OCI-LY7 (cell line): ENCODE measurements at regions of chr1 and their contacts with region 1.

Region 1: DNA sequence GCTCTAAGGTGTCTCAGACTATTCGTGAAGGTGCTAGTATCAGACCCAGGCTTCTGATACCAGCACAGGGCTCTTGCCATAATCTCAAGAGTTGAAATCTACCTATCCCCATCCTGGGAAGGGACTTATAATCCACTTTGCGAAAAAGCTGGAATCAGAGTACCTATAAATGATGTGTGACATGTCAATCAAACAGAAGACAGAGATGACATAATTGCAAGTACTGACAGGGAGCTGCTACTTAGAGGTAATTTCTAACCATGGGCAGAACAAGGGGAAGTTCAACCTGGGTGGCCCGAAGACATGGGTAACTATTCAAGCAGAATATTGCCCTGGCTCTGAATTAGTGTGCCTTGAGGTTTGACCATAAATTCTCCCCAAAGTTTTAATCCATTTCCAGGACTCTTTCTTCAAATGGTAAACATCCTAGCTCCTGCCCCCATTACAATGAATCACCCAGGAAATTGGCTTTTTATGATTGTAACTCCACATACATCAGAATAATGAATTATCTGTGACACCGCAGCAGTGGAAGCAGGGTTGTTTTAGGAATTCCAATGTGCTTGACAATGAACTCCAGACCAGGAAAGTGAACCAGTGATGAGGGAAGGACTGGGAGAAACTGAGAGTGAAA is 37.2 kb downstream of the KANK4 start:
- DNase-seq: no peak
- H3K4me3 ChIP-seq: no peak overlapping the region
- H3K27ac ChIP-seq: no peak overlapping the region
- H3K4me1 ChIP-seq: no peaks in the 10 kb centered on the region
- CTCF ChIP-seq: no peak

Region 2: DNA sequence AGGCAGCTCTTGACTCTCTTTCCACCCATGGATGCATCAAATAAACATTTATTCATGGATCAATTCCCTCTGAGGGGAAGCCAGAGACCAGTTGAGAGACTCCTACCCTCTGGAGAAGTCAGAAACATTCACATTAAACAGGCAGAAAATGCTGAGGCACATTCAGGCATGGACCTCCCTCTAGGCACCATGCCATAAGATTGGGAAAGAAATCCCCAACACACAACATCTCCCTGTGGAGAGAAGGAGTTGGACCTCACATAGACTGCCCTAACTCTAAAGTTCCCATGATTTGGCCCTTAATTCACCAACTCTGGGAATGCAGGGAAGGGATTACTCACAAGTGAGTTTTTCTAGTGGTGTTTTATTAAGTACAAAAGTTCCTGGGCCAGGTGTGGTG is 1793.2 kb before region 1 on chr1:
- CTCF ChIA-PET with region 1: no interaction called
- POLR2A ChIA-PET with region 1: no interaction called
- intact Hi-C with region 1: no loop called
- DNase-seq: no peak
- H3K4me3 ChIP-seq: no peak overlapping the region
- H3K27ac ChIP-seq: no peak overlapping the region
- H3K4me1 ChIP-seq: no peaks in the 10 kb centered on the region
- CTCF ChIP-seq: no peak

Region 3: GRCh38 chr1:60797351-60797750 is 1484.7 kb before region 1 on chr1:
- CTCF ChIA-PET with region 1: no interaction called
- POLR2A ChIA-PET with region 1: interaction called, 14 read pairs
- intact Hi-C with region 1: no loop called
- DNase-seq: no peak
- H3K4me3 ChIP-seq: no peak overlapping the region
- H3K27ac ChIP-seq: no peak overlapping the region
- H3K4me1 ChIP-seq: no peaks in the 10 kb centered on the region
- CTCF ChIP-seq: no peak